Common myeloid progenitor, CD34-positive (primary cell): ENCODE measurements at regions of chr19 and their contacts with region 1.

Region 1: GRCh38 chr19:17226002-17226933 is at the start of gene OCEL1:
- DNase-seq: peak; percentile 97 to 99 (median 99)
- H3K4me3 ChIP-seq: peak within 1 kb of the TSS; percentile 64 to 81 (median 76)
- H3K27ac ChIP-seq: peak within 1 kb of the TSS in 1 of 2 experiments; percentile 70
- H3K4me1 ChIP-seq: peaks cover 0 to 13% (median 8%) of the 10 kb centered on the region in 4 experiments
- H3K27me3 ChIP-seq: no peaks in the 10 kb centered on the region

Region 2: GRCh38 chr19:17215125-17215971 is 10.9 kb before region 1 on chr19 and contains the start of gene USE1:
- CTCF ChIA-PET with region 1: interaction called, 4 read pairs
- POLR2A ChIA-PET with region 1: interaction called, 10 read pairs
- DNase-seq: peak; percentile 91 to 95 (median 95)
- H3K4me3 ChIP-seq: peak within 1 kb of the TSS; percentile 69 to 87 (median 80)
- H3K27ac ChIP-seq: peak within 1 kb of the TSS; percentile 66 to 88
- H3K4me1 ChIP-seq: peaks cover 0 to 16% (median 16%) of the 10 kb centered on the region in 4 experiments
- H3K27me3 ChIP-seq: no peaks in the 10 kb centered on the region

Region 3: GRCh38 chr19:17255150-17255621 is 28.9 kb after region 1 on chr19:
- CTCF ChIA-PET with region 1: no interaction called
- POLR2A ChIA-PET with region 1: no interaction called
- DNase-seq: no peak
- H3K4me3 ChIP-seq: no peak overlapping the region
- H3K27ac ChIP-seq: no peak overlapping the region
- H3K4me1 ChIP-seq: no peaks in the 10 kb centered on the region
- H3K27me3 ChIP-seq: no peaks in the 10 kb centered on the region